Psoas muscle (tissue), 8 donors: ENCODE measurements at regions of chr6 and their contacts with region 1.

Region 1: DNA sequence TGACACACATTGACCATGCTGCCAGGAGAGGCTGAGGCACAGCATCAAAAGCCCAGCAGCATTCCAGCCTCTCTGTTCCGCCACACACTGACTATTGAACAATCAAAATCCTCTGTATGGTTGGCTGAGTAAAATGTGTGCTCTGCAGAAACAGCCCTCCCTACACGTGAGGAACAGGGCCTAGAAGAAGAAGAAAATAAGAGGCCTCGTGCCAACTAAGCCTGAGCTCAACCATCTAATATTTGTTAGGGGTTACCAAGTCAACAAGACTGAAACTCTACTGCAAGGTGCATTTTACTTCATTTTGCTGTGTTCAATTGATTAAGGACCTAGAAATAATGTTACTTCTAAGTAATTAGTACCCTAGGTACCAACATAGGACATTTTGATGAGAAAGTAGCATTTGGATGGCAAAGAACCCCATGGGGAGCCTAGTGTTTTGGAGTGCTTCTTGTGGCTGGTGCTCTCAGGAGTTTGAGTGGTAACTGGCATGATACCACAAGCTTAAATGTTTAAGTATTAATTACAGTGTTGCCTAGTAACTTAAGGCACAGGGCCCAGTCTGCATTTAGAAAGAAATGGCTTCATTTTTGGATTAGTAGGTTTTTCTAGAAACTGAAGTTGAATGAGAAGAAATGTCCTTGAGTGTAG is 146.6 kb upstream of the PLN start:
- DNase-seq: no peak
- ATAC-seq: no peak
- H3K4me3 ChIP-seq: no peak overlapping the region
- H3K27ac ChIP-seq: no peak overlapping the region
- H3K4me1 ChIP-seq: peaks cover 31% of the 10 kb centered on the region
- H3K27me3 ChIP-seq: no peaks in the 10 kb centered on the region
- CTCF ChIP-seq: no peak

Region 2: GRCh38 chr6:118473266-118473665 is 71.8 kb after region 1 on chr6:
- intact Hi-C with region 1: loop called in 1 of 2 experiments (anchors 5 kb)
- DNase-seq: no peak
- ATAC-seq: no peak
- H3K4me3 ChIP-seq: no peak overlapping the region
- H3K27ac ChIP-seq: no peak overlapping the region
- H3K4me1 ChIP-seq: peaks cover 15% of the 10 kb centered on the region
- H3K27me3 ChIP-seq: no peaks in the 10 kb centered on the region
- CTCF ChIP-seq: no peak

Region 3: GRCh38 chr6:119012521-119012920 is 611.1 kb after region 1 on chr6:
- intact Hi-C with region 1: no loop called
- DNase-seq: no peak
- ATAC-seq: no peak
- H3K4me3 ChIP-seq: no peak overlapping the region
- H3K27ac ChIP-seq: no peak overlapping the region
- H3K4me1 ChIP-seq: no peaks in the 10 kb centered on the region
- H3K27me3 ChIP-seq: no peaks in the 10 kb centered on the region
- CTCF ChIP-seq: no peak

Region 4: GRCh38 chr6:120129228-120129627 is 1727.8 kb after region 1 on chr6:
- intact Hi-C with region 1: no loop called
- DNase-seq: no peak
- ATAC-seq: no peak
- H3K4me3 ChIP-seq: no peak overlapping the region
- H3K27ac ChIP-seq: no peak overlapping the region
- H3K4me1 ChIP-seq: no peaks in the 10 kb centered on the region
- H3K27me3 ChIP-seq: no peaks in the 10 kb centered on the region
- CTCF ChIP-seq: no peak